MCF 10A (cell line): ENCODE measurements at regions of chr3 and their contacts with region 1.

Region 1: GRCh38 chr3:51371943-51372557 is 13.0 kb upstream of the MANF start:
- DNase-seq: peak; percentile 77
- H3K4me3 Mint-ChIP-seq: no peak overlapping the region
- H3K27ac Mint-ChIP-seq: no peak overlapping the region
- H3K4me1 Mint-ChIP-seq: no peaks in the 10 kb centered on the region
- H3K27me3 Mint-ChIP-seq: no peaks in the 10 kb centered on the region
- CTCF ChIP-seq: peak; percentile 86

Region 2: GRCh38 chr3:50971487-50971924 is 400.5 kb before region 1 on chr3:
- CTCF ChIA-PET with region 1: interaction called, 16 read pairs
- POLR2A ChIA-PET with region 1: no interaction called
- intact Hi-C with region 1: loop called (anchors 2 kb)
- DNase-seq: peak; percentile 59
- H3K4me3 Mint-ChIP-seq: no peak overlapping the region
- H3K27ac Mint-ChIP-seq: no peak overlapping the region
- H3K4me1 Mint-ChIP-seq: no peaks in the 10 kb centered on the region
- H3K27me3 Mint-ChIP-seq: peaks cover 7% of the 10 kb centered on the region
- CTCF ChIP-seq: peak; percentile 73

Region 3: DNA sequence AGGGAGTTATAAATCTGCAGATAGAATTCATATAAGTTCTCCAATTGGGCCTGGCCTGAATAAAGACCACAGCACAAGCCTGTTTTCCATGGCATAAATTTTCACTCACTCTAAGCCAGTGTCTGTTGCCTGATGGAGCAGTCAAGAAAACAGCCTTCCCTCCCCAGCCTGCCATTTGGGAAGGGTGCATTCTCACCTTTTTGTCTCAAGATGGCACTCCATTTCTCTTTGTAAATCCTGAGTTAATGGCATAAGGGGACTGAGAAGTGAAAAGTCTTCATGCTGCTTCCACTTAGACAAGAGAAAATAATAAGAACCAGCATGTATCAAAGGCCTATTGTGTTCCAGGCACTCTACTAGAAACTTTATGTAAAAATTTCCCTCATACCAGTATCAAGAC is 102.6 kb before region 1 on chr3:
- CTCF ChIA-PET with region 1: interaction called, 33 read pairs
- POLR2A ChIA-PET with region 1: no interaction called
- intact Hi-C with region 1: loop called (anchors 1 kb)
- DNase-seq: peak; percentile 39
- H3K4me3 Mint-ChIP-seq: no peak overlapping the region
- H3K27ac Mint-ChIP-seq: no peak overlapping the region
- H3K4me1 Mint-ChIP-seq: no peaks in the 10 kb centered on the region
- H3K27me3 Mint-ChIP-seq: peaks cover 3% of the 10 kb centered on the region
- CTCF ChIP-seq: peak; percentile 23

Region 4: GRCh38 chr3:51340013-51340856 is 31.8 kb before region 1 on chr3:
- CTCF ChIA-PET with region 1: interaction called, 6 read pairs
- POLR2A ChIA-PET with region 1: interaction called, 5 read pairs
- intact Hi-C with region 1: loop called (anchors 2 kb)
- DNase-seq: peak; percentile 91
- H3K4me3 Mint-ChIP-seq: peak overlapping the region; percentile 17
- H3K27ac Mint-ChIP-seq: peak overlapping the region; percentile 97
- H3K4me1 Mint-ChIP-seq: peaks cover 46% of the 10 kb centered on the region
- H3K27me3 Mint-ChIP-seq: no peaks in the 10 kb centered on the region
- CTCF ChIP-seq: no peak

Region 5: DNA sequence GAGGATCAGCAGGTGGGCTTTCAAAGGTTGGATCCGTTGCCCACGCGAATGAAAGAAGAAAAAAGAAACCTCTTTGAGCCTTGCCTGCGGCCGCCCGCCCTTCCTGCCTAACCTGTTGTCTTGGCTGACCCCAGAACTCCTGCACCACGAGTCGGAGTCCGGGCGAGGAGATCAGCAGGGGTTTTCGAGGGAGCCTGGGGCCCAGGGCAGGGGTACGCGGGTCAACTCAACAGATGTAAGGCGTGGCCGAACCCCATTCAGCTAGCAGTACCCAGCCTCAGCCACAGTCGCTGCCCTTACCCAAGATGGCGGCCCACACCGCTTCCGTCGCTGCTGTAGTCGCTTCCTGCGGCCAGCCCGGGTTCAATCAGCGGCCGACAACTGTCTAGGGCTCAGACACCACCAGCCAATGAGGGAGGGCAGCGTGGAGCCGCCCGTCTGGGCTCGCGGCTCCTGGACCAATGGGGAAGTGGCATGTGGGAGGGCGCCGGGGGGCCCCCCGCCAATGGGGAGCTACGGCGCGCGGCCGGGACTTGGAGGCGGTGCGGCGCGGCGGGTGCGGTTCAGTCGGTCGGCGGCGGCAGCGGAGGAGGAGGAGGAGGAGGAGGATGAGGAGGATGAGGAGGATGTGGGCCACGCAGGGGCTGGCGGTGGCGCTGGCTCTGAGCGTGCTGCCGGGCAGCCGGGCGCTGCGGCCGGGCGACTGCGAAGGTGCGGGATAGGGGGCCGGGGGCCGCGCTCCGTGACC is 12.8 kb after region 1 on chr3 and contains the start of gene MANF:
- CTCF ChIA-PET with region 1: interaction called, 19 read pairs
- POLR2A ChIA-PET with region 1: no interaction called
- intact Hi-C with region 1: no loop called
- DNase-seq: peak; percentile 98
- H3K4me3 Mint-ChIP-seq: peak within 1 kb of the TSS; percentile 90
- H3K27ac Mint-ChIP-seq: peak within 1 kb of the TSS; percentile 98
- H3K4me1 Mint-ChIP-seq: peaks cover 26% of the 10 kb centered on the region
- H3K27me3 Mint-ChIP-seq: no peaks in the 10 kb centered on the region
- CTCF ChIP-seq: no peak
- total RNA-seq, gene MANF: 271 and 273 TPM in 2 replicates

Region 6: GRCh38 chr3:51397392-51397791 is 25.3 kb after region 1 on chr3:
- CTCF ChIA-PET with region 1: no interaction called
- POLR2A ChIA-PET with region 1: no interaction called
- intact Hi-C with region 1: no loop called
- DNase-seq: no peak
- H3K4me3 Mint-ChIP-seq: no peak overlapping the region
- H3K27ac Mint-ChIP-seq: no peak overlapping the region
- H3K4me1 Mint-ChIP-seq: peaks cover 12% of the 10 kb centered on the region
- H3K27me3 Mint-ChIP-seq: no peaks in the 10 kb centered on the region
- CTCF ChIP-seq: no peak

Region 7: GRCh38 chr3:51511000-51511399 is 138.9 kb after region 1 on chr3:
- CTCF ChIA-PET with region 1: no interaction called
- POLR2A ChIA-PET with region 1: no interaction called
- intact Hi-C with region 1: no loop called
- DNase-seq: no peak
- H3K4me3 Mint-ChIP-seq: no peak overlapping the region
- H3K27ac Mint-ChIP-seq: no peak overlapping the region
- H3K4me1 Mint-ChIP-seq: no peaks in the 10 kb centered on the region
- H3K27me3 Mint-ChIP-seq: no peaks in the 10 kb centered on the region
- CTCF ChIP-seq: no peak

Region 8: DNA sequence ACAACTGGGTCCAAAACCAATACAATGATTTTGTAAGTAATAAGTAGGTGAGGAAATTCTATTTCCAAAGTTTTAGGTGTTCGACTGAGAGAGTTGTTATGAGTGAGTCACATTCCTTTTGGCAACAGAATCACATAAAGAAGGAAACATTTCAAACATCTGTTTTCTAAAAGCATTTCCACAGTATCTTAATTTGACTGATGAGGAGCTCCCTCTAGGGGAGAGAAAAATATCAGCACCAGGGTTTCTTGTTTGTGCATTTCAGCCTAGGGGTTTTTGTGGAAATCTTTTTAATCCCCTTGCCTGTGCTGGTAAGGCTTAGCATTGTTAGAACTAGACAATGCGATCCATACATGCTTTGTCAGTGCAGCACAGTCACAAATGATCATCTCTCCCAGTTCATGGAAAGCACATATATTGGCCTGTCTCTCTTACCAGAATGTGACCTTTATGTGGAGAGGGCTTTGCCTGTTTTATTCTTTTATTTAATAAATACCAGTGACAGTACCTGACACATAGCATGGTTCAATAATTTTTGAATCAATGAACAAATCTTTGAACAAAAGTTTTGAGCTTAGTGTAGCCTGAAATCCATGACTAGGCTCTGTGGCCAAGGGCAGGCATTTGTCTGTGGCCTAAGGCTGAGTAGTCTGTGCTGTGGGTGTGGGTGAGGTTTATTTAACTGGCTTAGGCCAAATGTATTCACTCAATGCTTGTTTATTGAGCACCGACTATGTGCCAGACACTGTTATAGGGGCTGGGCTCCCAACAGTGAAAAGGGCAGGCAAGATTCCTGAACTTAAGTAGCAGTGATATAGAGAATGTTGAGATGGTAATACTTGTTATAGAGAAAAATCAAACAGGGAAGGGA is 428.1 kb after region 1 on chr3:
- CTCF ChIA-PET with region 1: no interaction called
- POLR2A ChIA-PET with region 1: no interaction called
- intact Hi-C with region 1: no loop called
- DNase-seq: peak; percentile 77
- H3K4me3 Mint-ChIP-seq: no peak overlapping the region
- H3K27ac Mint-ChIP-seq: no peak overlapping the region
- H3K4me1 Mint-ChIP-seq: peaks cover 13% of the 10 kb centered on the region
- H3K27me3 Mint-ChIP-seq: no peaks in the 10 kb centered on the region
- CTCF ChIP-seq: peak; percentile 80